Naive thymus-derived CD4-positive, alpha-beta T cell (primary cell): ENCODE measurements at regions of chr17 and their contacts with region 1.

Region 1: GRCh38 chr17:42517516-42517915 is 18.5 kb upstream of the NAGLU start:
- DNase-seq: peak; percentile 67 to 83 (median 75)
- ATAC-seq: peak; percentile 87
- H3K4me3 ChIP-seq: no peak overlapping the region
- H3K4me3 Mint-ChIP-seq: no peak overlapping the region
- H3K27ac ChIP-seq: no peak overlapping the region
- H3K27ac Mint-ChIP-seq: peak overlapping the region in 1 of 9 donors; percentile 12
- H3K4me1 ChIP-seq: no peaks in the 10 kb centered on the region
- H3K4me1 Mint-ChIP-seq: peaks cover 5 to 8% (median 5%) of the 10 kb centered on the region in 7 donors
- H3K27me3 ChIP-seq: no peaks in the 10 kb centered on the region
- H3K27me3 Mint-ChIP-seq: peaks cover 0 to 4% (median 0%) of the 10 kb centered on the region in 5 donors

Region 2: GRCh38 chr17:42322382-42323267 is 194.9 kb before region 1 on chr17:
- CTCF ChIA-PET with region 1: interaction called, 7 read pairs
- POLR2A ChIA-PET with region 1: interaction called, 3 read pairs
- intact Hi-C with region 1: loop called (anchors 1 to 2 kb)
- DNase-seq: peak; percentile 80 to 95 (median 93)
- ATAC-seq: peak; percentile 100
- H3K4me3 ChIP-seq: no peak overlapping the region
- H3K4me3 Mint-ChIP-seq: peak overlapping the region in 3 of 10 donors; percentile 19 to 45 (median 27)
- H3K27ac ChIP-seq: peak overlapping the region; percentile 40
- H3K27ac Mint-ChIP-seq: peak overlapping the region; percentile 42 to 91 (median 80)
- H3K4me1 ChIP-seq: peaks cover 3 to 23% of the 10 kb centered on the region in 2 donors
- H3K4me1 Mint-ChIP-seq: peaks cover 19 to 55% (median 43%) of the 10 kb centered on the region in 7 donors
- H3K27me3 ChIP-seq: no peaks in the 10 kb centered on the region
- H3K27me3 Mint-ChIP-seq: no peaks in the 10 kb centered on the region

Region 3: GRCh38 chr17:42428141-42428944 is 89.2 kb before region 1 on chr17:
- CTCF ChIA-PET with region 1: interaction called, 11 read pairs
- POLR2A ChIA-PET with region 1: no interaction called
- intact Hi-C with region 1: loop called (anchors 1 kb)
- DNase-seq: peak in 7 of 9 donors; percentile 30 to 58 (median 49)
- ATAC-seq: peak; percentile 79
- H3K4me3 ChIP-seq: no peak overlapping the region
- H3K4me3 Mint-ChIP-seq: no peak overlapping the region
- H3K27ac ChIP-seq: no peak overlapping the region
- H3K27ac Mint-ChIP-seq: no peak overlapping the region
- H3K4me1 ChIP-seq: peaks cover 0 to 3% of the 10 kb centered on the region in 2 donors
- H3K4me1 Mint-ChIP-seq: peaks cover 0 to 6% (median 3%) of the 10 kb centered on the region in 7 donors
- H3K27me3 ChIP-seq: peaks cover 2 to 5% of the 10 kb centered on the region in 2 donors
- H3K27me3 Mint-ChIP-seq: peaks cover 0 to 59% (median 5%) of the 10 kb centered on the region in 5 donors

Region 4: GRCh38 chr17:42438600-42439567 is 78.6 kb before region 1 on chr17:
- CTCF ChIA-PET with region 1: interaction called, 6 read pairs
- POLR2A ChIA-PET with region 1: interaction called, 3 read pairs
- intact Hi-C with region 1: loop called (anchors 1 kb)
- DNase-seq: peak in 6 of 9 donors; percentile 29 to 56 (median 42)
- ATAC-seq: peak; percentile 36
- H3K4me3 ChIP-seq: no peak overlapping the region
- H3K4me3 Mint-ChIP-seq: no peak overlapping the region
- H3K27ac ChIP-seq: no peak overlapping the region
- H3K27ac Mint-ChIP-seq: no peak overlapping the region
- H3K4me1 ChIP-seq: peaks cover 0 to 8% of the 10 kb centered on the region in 2 donors
- H3K4me1 Mint-ChIP-seq: peaks cover 8 to 17% (median 14%) of the 10 kb centered on the region in 7 donors
- H3K27me3 ChIP-seq: peaks cover 0 to 3% of the 10 kb centered on the region in 2 donors
- H3K27me3 Mint-ChIP-seq: peaks cover 0 to 20% (median 0%) of the 10 kb centered on the region in 5 donors

Region 5: DNA sequence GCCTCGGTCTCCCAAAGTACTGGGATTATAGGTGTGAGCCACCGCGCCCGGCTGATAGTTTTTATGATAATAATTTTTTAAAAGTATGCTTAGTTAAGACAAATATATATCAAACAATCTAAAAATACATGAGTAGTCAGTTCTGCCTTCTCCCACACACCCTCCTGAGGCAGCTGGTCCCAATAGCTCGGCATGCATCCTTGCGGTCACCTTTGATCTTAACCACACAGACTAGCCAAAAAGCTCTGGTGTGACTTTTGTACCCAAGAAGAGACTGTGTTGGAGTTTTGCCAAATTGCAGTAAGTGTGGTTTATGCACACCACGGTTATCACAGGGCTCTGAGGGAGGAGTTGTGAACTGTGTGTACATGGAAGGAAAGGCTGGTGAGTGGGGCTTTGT is 33.2 kb before region 1 on chr17:
- CTCF ChIA-PET with region 1: no interaction called
- POLR2A ChIA-PET with region 1: no interaction called
- intact Hi-C with region 1: loop called in 1 of 2 experiments (anchors 2 kb)
- DNase-seq: peak in 8 of 9 donors; percentile 63 to 75 (median 72)
- ATAC-seq: peak; percentile 95
- H3K4me3 ChIP-seq: no peak overlapping the region
- H3K4me3 Mint-ChIP-seq: peak overlapping the region in 8 of 10 donors; percentile 54 to 80 (median 60)
- H3K27ac ChIP-seq: no peak overlapping the region
- H3K27ac Mint-ChIP-seq: peak overlapping the region; percentile 9 to 70 (median 60)
- H3K4me1 ChIP-seq: peaks cover 17 to 30% of the 10 kb centered on the region in 2 donors
- H3K4me1 Mint-ChIP-seq: peaks cover 17 to 43% (median 33%) of the 10 kb centered on the region in 7 donors
- H3K27me3 ChIP-seq: no peaks in the 10 kb centered on the region
- H3K27me3 Mint-ChIP-seq: peaks cover 0 to 7% (median 0%) of the 10 kb centered on the region in 5 donors